ENCODE measurements at regions of chr9 and their contacts with region 1.

Region 1: GRCh38 chr9:128175102-128175563 is 15.1 kb downstream of the BBLN start:
- DNase-seq: no peak
- ATAC-seq: no peak
- H3K4me3 ChIP-seq: no peak overlapping the region
- H3K27ac ChIP-seq: no peak overlapping the region
- H3K4me1 ChIP-seq: no peaks in the 10 kb centered on the region
- H3K27me3 ChIP-seq: no peaks in the 10 kb centered on the region
- CTCF ChIP-seq: no peak

Region 2: DNA sequence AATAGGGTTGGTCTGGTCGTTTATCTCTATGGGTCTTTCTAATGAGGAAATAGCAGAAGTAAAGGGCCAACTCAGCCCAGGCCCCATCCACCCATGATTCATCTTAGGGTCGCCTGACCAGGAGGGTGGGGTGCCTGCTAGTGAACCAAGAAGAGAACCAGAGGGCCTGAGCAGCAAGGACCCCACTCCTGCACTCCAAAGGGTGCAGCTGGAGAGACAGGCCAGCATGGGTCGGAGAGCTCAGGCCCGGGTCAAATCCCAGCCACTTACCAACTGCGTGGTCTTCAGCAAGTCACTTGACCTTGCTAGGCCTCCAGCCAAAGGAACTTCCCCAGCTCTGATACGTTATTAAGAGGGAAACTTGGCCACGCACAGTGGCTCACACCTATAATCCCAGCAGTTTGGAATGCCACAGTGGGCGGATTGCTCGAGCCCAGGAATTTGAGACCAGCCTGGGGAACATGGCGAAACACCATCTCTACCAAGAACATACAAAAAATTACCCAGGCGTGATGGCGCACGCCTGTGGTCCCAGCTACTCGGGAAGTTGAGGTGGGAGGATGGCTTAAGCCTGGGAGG is 10.7 kb before region 1 on chr9:
- CTCF ChIA-PET with region 1: interaction called, 11 read pairs
- POLR2A ChIA-PET with region 1: no interaction called
- in situ Hi-C with region 1: no loop called
- intact Hi-C with region 1: no loop called
- DNase-seq: no peak
- ATAC-seq: no peak
- H3K4me3 ChIP-seq: no peak overlapping the region
- H3K27ac ChIP-seq: no peak overlapping the region
- H3K4me1 ChIP-seq: 0 out of 2 replicates have a peak, but pooled peaks cover 5% of the 10 kb centered on the region
- H3K27me3 ChIP-seq: no peaks in the 10 kb centered on the region
- CTCF ChIP-seq: no peak

Region 3: DNA sequence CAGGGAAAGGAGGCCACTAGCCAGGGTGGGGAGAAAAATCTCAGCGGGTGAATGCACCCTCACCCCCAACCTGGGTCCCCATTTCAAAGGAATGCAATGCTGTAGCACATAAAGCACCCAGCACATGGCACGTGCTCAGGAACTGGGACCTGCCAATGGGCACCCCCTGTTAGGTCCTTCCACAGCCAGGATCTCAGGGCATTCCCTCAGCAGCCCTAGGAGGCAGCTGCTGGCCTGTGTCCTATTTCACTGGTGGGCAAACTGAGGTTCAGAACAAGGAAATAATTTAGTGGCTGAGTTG is 36.8 kb after region 1 on chr9:
- CTCF ChIA-PET with region 1: no interaction called
- POLR2A ChIA-PET with region 1: interaction called, 10 read pairs
- in situ Hi-C with region 1: no loop called
- intact Hi-C with region 1: no loop called
- DNase-seq: no peak
- ATAC-seq: no peak
- H3K4me3 ChIP-seq: no peak overlapping the region
- H3K27ac ChIP-seq: no peak overlapping the region
- H3K4me1 ChIP-seq: no peaks in the 10 kb centered on the region
- H3K27me3 ChIP-seq: no peaks in the 10 kb centered on the region
- CTCF ChIP-seq: no peak